Naive thymus-derived CD4-positive, alpha-beta T cell (primary cell): ENCODE measurements at regions of chr20 and their contacts with region 1.

Region 1: GRCh38 chr20:5788385-5788895 is 38.2 kb downstream of the SHLD1 start:
- DNase-seq: peak; percentile 21 to 88 (median 83)
- ATAC-seq: peak; percentile 100
- H3K4me3 ChIP-seq: no peak overlapping the region
- H3K4me3 Mint-ChIP-seq: no peak overlapping the region
- H3K27ac ChIP-seq: no peak overlapping the region
- H3K27ac Mint-ChIP-seq: peak overlapping the region in 6 of 9 donors; percentile 8 to 89 (median 68)
- H3K4me1 ChIP-seq: no peaks in the 10 kb centered on the region
- H3K4me1 Mint-ChIP-seq: peaks cover 0 to 22% (median 9%) of the 10 kb centered on the region in 7 donors
- H3K27me3 ChIP-seq: no peaks in the 10 kb centered on the region
- H3K27me3 Mint-ChIP-seq: no peaks in the 10 kb centered on the region

Region 2: GRCh38 chr20:5550733-5551529 is 237.5 kb before region 1 on chr20:
- CTCF ChIA-PET with region 1: interaction called, 26 read pairs
- POLR2A ChIA-PET with region 1: interaction called, 3 read pairs
- intact Hi-C with region 1: no loop called
- DNase-seq: peak in 2 of 9 donors; percentile 22 to 23
- ATAC-seq: peak; percentile 50
- H3K4me3 ChIP-seq: no peak overlapping the region
- H3K4me3 Mint-ChIP-seq: no peak overlapping the region
- H3K27ac ChIP-seq: no peak overlapping the region
- H3K27ac Mint-ChIP-seq: peak overlapping the region in 6 of 9 donors; percentile 33 to 78 (median 54)
- H3K4me1 ChIP-seq: peaks cover 0 to 3% of the 10 kb centered on the region in 2 donors
- H3K4me1 Mint-ChIP-seq: peaks cover 17 to 63% (median 38%) of the 10 kb centered on the region in 7 donors
- H3K27me3 ChIP-seq: no peaks in the 10 kb centered on the region
- H3K27me3 Mint-ChIP-seq: no peaks in the 10 kb centered on the region

Region 3: DNA sequence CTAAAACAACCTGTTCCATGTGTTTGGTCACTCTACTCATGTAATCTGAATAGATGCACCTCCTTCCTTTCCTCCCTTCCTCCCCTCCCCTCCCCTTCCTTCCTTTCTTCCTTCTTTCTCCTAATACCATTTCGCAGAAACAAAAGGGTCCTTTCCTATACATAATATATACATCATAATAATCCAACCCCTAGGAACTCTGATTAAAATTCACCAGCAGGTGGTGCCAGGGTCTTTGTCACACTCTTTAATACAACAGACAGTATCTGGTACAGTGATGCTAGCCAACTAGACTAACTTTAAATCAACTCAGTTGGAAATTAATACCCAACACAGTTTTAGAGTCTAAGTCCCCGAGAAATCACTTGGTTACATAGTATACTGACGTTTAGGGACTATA is 219.4 kb before region 1 on chr20:
- CTCF ChIA-PET with region 1: interaction called, 57 read pairs
- POLR2A ChIA-PET with region 1: interaction called, 5 read pairs
- intact Hi-C with region 1: loop called (anchors 1 kb)
- DNase-seq: peak in 7 of 9 donors; percentile 56 to 75 (median 67)
- ATAC-seq: peak; percentile 77
- H3K4me3 ChIP-seq: no peak overlapping the region
- H3K4me3 Mint-ChIP-seq: peak overlapping the region in 8 of 10 donors; percentile 22 to 83 (median 49)
- H3K27ac ChIP-seq: peak overlapping the region; percentile 58
- H3K27ac Mint-ChIP-seq: peak overlapping the region; percentile 6 to 96 (median 90)
- H3K4me1 ChIP-seq: peaks cover 0 to 17% of the 10 kb centered on the region in 2 donors
- H3K4me1 Mint-ChIP-seq: peaks cover 20 to 59% (median 36%) of the 10 kb centered on the region in 7 donors
- H3K27me3 ChIP-seq: no peaks in the 10 kb centered on the region
- H3K27me3 Mint-ChIP-seq: no peaks in the 10 kb centered on the region

Region 4: DNA sequence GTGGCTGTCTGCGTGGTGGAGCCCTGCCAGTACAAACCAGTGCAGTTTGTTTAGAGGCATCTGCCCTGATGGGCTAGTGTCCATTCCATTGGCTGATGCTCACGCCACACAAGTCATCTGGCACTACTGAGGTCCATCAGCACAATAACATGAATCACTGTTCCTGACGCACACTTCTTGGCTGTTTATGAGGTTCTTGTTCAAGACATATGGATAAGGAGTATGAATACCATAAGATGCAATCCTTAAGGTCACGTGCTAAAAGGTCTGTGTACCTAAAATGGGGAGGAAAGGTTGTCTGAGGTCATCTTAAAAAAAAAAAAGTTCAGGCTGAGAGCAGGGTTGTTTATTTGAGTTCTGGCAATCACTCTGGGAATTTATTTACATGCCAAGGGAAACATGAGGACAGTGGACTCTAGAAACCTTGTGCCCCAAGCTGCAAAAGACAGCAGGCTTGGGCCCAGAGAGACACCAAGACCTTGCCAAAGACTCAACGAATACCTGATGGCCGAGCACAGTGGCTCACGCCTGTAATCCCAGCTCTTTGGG is 92.4 kb before region 1 on chr20:
- CTCF ChIA-PET with region 1: no interaction called
- POLR2A ChIA-PET with region 1: no interaction called
- intact Hi-C with region 1: loop called in 1 of 2 experiments (anchors 1 kb)
- DNase-seq: no peak
- ATAC-seq: no peak
- H3K4me3 ChIP-seq: no peak overlapping the region
- H3K4me3 Mint-ChIP-seq: no peak overlapping the region
- H3K27ac ChIP-seq: no peak overlapping the region
- H3K27ac Mint-ChIP-seq: no peak overlapping the region
- H3K4me1 ChIP-seq: no peaks in the 10 kb centered on the region
- H3K4me1 Mint-ChIP-seq: peaks cover 0 to 5% (median 0%) of the 10 kb centered on the region in 7 donors
- H3K27me3 ChIP-seq: no peaks in the 10 kb centered on the region
- H3K27me3 Mint-ChIP-seq: no peaks in the 10 kb centered on the region

Region 5: GRCh38 chr20:6008254-6008653 is 219.8 kb after region 1 on chr20:
- CTCF ChIA-PET with region 1: no interaction called
- POLR2A ChIA-PET with region 1: no interaction called
- intact Hi-C with region 1: loop called (anchors 1 kb)
- DNase-seq: no peak
- ATAC-seq: no peak
- H3K4me3 ChIP-seq: no peak overlapping the region
- H3K4me3 Mint-ChIP-seq: peak overlapping the region; percentile 58 to 99 (median 96)
- H3K27ac ChIP-seq: no peak overlapping the region
- H3K27ac Mint-ChIP-seq: peak overlapping the region in 8 of 9 donors; percentile 10 to 77 (median 39)
- H3K4me1 ChIP-seq: peaks cover 3 to 16% of the 10 kb centered on the region in 2 donors
- H3K4me1 Mint-ChIP-seq: peaks cover 30 to 68% (median 44%) of the 10 kb centered on the region in 7 donors
- H3K27me3 ChIP-seq: no peaks in the 10 kb centered on the region
- H3K27me3 Mint-ChIP-seq: no peaks in the 10 kb centered on the region